K562 (cell line): ENCODE measurements at regions of chr2 and their contacts with region 1.

Region 1: DNA sequence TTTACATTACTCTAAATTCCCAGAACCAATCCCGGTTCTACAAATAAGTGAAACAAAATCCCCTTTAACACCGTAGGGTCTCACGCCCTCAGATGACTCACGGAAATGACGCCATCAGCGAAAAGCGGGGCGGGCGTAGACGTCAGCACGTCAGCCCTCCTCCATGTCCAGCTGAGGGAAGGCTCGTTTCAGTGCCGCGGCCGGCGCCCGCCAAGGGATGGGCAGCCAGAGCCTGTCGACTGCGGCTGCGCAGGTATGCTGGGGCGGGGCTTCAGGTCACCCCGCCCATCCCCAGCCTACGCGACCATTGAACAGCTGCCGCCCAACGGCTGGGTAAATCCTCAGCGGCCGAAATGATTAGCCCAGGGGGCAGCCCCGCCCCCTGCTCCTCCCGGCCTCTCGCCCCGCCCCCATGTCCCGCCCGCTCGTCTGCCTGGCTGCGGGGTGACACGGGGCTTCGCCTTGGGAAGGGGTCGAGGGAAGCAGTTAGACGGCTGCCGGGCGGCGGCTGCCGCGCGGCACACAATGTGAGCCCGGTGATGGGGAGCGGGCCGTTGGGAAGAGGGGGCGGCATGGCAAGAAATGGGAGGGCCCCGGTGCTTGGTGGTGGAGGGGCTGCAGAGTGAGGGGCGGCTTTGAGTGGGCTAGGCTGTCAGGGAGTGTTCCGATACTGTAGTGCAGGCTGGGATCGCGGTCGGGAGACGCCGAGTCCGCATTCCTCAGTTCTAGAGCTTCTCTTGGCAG is at the start of gene NBEAL1:
- DNase-seq: peak; percentile 90 to 95 (median 92)
- ATAC-seq: peak; percentile 88
- H3K4me3 ChIP-seq: peak within 1 kb of the TSS; percentile 87
- H3K27ac ChIP-seq: peak within 1 kb of the TSS; percentile 88
- H3K4me1 ChIP-seq: peaks cover 4 to 7% of the 10 kb centered on the region in 2 experiments; a peak in 4 of 5 replicates
- H3K27me3 ChIP-seq: no peaks in the 10 kb centered on the region
- CTCF ChIP-seq: no peak
- EP300 ChIP-seq: no peak
- POLR2A ChIP-seq: peak; percentile 72
- RAD21 ChIP-seq: no peak
- polyA plus RNA-seq, gene NBEAL1: 2.1 to 4.3 TPM

Region 2: DNA sequence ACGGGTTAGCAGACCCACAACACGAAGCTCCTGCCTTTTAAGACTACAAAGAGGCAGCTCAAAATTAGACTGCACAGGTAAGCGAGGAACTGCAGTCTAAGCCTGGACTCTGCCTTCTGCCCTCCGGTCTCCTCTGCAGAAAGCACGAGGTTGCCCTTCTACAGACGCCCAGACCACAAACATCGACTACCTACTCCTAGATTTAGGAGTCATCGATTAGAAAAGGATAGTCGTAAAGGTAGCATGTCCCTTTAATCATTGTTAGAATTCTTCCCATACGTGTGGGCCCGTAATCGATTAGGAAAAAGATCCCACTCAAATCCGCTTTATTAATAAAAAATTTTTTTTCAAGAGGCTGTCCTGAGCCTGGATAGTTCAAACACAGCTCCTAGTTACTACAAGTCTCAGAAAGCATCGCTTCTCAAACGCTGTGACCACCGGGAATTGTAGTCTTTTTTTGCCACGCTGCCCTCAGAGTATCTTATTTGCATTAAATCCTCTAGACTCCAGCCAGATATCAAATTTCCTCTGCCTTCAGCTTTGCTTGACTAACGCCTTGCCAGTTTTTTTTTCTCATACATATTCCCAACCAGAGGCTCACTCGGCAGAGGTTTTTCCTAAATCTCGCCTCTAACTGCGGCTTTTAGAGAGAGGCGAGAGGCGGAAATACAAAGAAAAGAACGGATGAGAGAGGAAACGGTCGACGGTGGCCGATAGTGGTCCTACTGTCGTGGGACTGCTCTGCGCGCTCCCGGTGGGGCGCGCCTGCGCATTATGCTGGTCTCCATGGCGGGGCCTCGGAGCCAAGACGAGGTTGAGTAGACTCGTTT is 102.9 kb before region 1 on chr2 and contains the starts of genes CARF and WDR12:
- CTCF ChIA-PET with region 1: no interaction called
- POLR2A ChIA-PET with region 1: no interaction called
- in situ Hi-C with region 1: no loop called
- intact Hi-C with region 1: loop called (anchors 2 kb)
- DNase-seq: peak; percentile 74 to 92 (median 80)
- ATAC-seq: peak; percentile 79
- H3K4me3 ChIP-seq: peak within 1 kb of the TSS; percentile 69
- H3K27ac ChIP-seq: peak within 1 kb of the TSS; percentile 93
- H3K4me1 ChIP-seq: peaks cover 0 to 5% of the 10 kb centered on the region in 2 experiments; a peak in 2 of 5 replicates
- H3K27me3 ChIP-seq: no peaks in the 10 kb centered on the region
- CTCF ChIP-seq: no peak
- EP300 ChIP-seq: no peak
- POLR2A ChIP-seq: peak; percentile 81
- RAD21 ChIP-seq: no peak
- polyA plus RNA-seq, gene CARF: 0.31 to 0.80 TPM
- polyA plus RNA-seq, gene WDR12: 498 to 554 TPM

Region 3: GRCh38 chr2:202950592-202950991 is 64.0 kb before region 1 on chr2:
- CTCF ChIA-PET with region 1: no interaction called
- POLR2A ChIA-PET with region 1: no interaction called
- in situ Hi-C with region 1: no loop called
- intact Hi-C with region 1: loop called (anchors 5 kb)
- DNase-seq: peak; percentile 33 to 74 (median 46)
- ATAC-seq: peak; percentile 95
- H3K4me3 ChIP-seq: no peak overlapping the region
- H3K27ac ChIP-seq: peak overlapping the region; percentile 68; the same call in 2 of the 3 replicates
- H3K4me1 ChIP-seq: peaks cover 0 to 4% of the 10 kb centered on the region in 2 experiments; a peak in 2 of 5 replicates
- H3K27me3 ChIP-seq: no peaks in the 10 kb centered on the region
- CTCF ChIP-seq: no peak
- EP300 ChIP-seq: peak; percentile 79
- POLR2A ChIP-seq: no peak
- RAD21 ChIP-seq: no peak